SK-N-SH (cell line): ENCODE measurements at regions of chr16 and their contacts with region 1.

Region 1: GRCh38 chr16:80986557-80986956 is 20.1 kb downstream of the CMC2 start:
- DNase-seq: no peak
- H3K4me3 ChIP-seq: no peak overlapping the region
- H3K27ac ChIP-seq: no peak overlapping the region
- H3K4me1 ChIP-seq: peaks cover 0 to 2% of the 10 kb centered on the region in 2 experiments; a peak in 1 of 4 replicates
- H3K27me3 ChIP-seq: no peaks in the 10 kb centered on the region
- CTCF ChIP-seq: no peak
- EP300 ChIP-seq: no peak
- RAD21 ChIP-seq: no peak

Region 2: DNA sequence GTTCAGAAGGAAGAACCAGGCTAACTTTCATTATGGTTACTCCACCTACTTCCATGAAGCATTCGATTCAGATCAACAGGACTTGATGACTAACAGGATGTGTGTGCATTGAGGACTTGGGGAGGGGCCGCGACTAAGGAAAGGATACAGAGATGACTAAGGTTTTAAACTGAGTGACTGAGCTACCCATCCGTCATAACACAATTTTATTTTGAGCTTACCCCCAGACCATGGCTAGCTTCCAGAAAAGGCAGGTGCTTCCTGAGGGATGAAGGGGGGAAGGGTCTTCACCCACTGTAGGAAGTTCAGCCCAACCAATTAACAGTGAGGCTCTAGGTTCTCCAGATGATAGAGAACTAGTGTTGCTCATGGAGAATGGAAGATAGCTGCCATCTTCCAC is 179.6 kb before region 1 on chr16:
- CTCF ChIA-PET with region 1: no interaction called
- POLR2A ChIA-PET with region 1: no interaction called
- DNase-seq: no peak
- H3K4me3 ChIP-seq: no peak overlapping the region
- H3K27ac ChIP-seq: no peak overlapping the region
- H3K4me1 ChIP-seq: peaks cover 0 to 7% of the 10 kb centered on the region in 2 experiments; a peak in 1 of 4 replicates
- H3K27me3 ChIP-seq: no peaks in the 10 kb centered on the region
- CTCF ChIP-seq: no peak
- EP300 ChIP-seq: no peak
- RAD21 ChIP-seq: no peak

Region 3: GRCh38 chr16:80974649-80975376 is 11.7 kb before region 1 on chr16:
- CTCF ChIA-PET with region 1: interaction called, 13 read pairs
- POLR2A ChIA-PET with region 1: no interaction called
- DNase-seq: no peak
- H3K4me3 ChIP-seq: no peak overlapping the region
- H3K27ac ChIP-seq: no peak overlapping the region
- H3K4me1 ChIP-seq: no peaks in the 10 kb centered on the region; a peak in 1 of 4 replicates
- H3K27me3 ChIP-seq: no peaks in the 10 kb centered on the region
- CTCF ChIP-seq: peak; percentile 59
- EP300 ChIP-seq: no peak
- RAD21 ChIP-seq: no peak

Region 4: DNA sequence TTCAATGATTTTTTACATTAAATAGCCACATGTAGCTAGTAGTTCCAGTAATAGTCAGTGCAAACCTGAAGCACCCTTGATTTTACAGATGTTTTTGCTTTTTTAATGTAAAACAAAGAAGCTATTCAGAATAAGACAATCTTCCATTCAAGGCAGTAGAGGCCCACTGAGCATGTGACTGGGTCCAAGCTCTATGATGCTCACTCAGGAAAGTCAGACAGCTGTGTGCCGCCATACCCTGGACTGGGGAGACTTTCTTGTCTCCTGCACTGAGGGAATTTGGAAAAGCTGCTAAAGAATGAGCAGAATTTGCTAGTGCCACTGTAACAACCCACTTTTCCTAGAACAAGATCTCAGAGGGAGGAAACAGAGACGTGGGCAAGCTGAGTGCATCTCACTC is 31.9 kb after region 1 on chr16:
- CTCF ChIA-PET with region 1: no interaction called
- POLR2A ChIA-PET with region 1: no interaction called
- DNase-seq: no peak
- H3K4me3 ChIP-seq: no peak overlapping the region
- H3K27ac ChIP-seq: no peak overlapping the region
- H3K4me1 ChIP-seq: no peaks in the 10 kb centered on the region
- H3K27me3 ChIP-seq: no peaks in the 10 kb centered on the region
- CTCF ChIP-seq: no peak
- EP300 ChIP-seq: no peak
- RAD21 ChIP-seq: no peak